ENCODE measurements at regions of chr3 and their contacts with region 1.

Region 1: GRCh38 chr3:188212308-188212969 is 58.5 kb downstream of the LPP start:
- DNase-seq: peak; percentile 43 to 79
- H3K4me3 ChIP-seq: peak overlapping the region; percentile 50 to 54
- H3K27ac ChIP-seq: peak overlapping the region; percentile 87 to 94
- H3K4me1 ChIP-seq: peaks cover 0 to 96% (median 42%) of the 10 kb centered on the region in 4 donors
- H3K27me3 ChIP-seq: no peaks in the 10 kb centered on the region
- CTCF ChIP-seq: no peak

Region 2: DNA sequence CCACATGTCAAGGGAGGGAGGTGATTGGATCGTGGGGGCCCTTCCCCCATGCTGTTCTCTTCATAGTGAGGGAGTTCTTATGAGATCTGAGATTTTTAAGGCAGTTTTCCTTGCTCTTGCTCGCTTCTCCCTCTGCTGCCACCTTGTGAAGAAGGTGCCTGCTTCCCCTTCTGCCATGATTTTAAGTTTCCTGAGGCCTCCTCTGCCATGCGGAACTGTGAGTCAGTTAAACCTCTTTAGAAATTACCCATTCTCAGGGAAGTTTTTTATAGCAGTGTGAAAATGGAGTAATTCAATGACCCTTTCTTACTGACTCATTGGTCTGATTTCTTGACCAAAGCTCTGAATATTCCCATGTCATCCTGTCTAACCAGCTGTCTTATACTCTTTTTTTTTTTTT is 474.9 kb after region 1 on chr3:
- intact Hi-C with region 1: loop called (anchors 5 kb)
- DNase-seq: no peak
- H3K4me3 ChIP-seq: no peak overlapping the region
- H3K27ac ChIP-seq: peak overlapping the region; percentile 33 to 65
- H3K4me1 ChIP-seq: peaks cover 0 to 89% (median 50%) of the 10 kb centered on the region in 4 donors
- H3K27me3 ChIP-seq: no peaks in the 10 kb centered on the region
- CTCF ChIP-seq: no peak

Region 3: GRCh38 chr3:189001559-189001958 is 789.1 kb after region 1 on chr3:
- intact Hi-C with region 1: no loop called
- DNase-seq: no peak
- H3K4me3 ChIP-seq: no peak overlapping the region
- H3K27ac ChIP-seq: no peak overlapping the region
- H3K4me1 ChIP-seq: no peaks in the 10 kb centered on the region
- H3K27me3 ChIP-seq: no peaks in the 10 kb centered on the region
- CTCF ChIP-seq: no peak

Region 4: DNA sequence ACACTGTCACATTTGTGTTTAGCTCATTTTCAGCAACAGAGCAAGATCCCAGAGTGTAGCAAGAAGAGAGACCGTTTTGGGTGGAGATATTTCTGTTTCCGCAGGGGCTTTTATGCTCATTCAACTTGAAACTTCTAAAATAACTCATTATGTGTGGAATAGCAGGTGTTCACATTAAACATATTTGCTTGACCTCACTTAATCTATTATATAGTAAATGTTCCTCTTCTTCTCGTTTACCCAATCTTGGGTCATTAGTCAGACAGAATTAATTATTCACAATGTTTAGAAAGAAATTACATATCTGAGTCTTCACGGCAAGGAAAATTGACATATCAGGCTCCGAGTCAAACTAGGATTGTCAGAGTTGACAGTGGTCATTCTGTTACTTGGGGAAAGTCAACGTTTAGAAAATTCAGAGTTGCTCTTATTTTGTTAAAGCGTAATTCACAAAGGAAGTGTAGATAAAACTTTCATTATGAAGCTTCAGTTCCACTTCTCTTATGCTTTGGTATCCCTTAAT is 1182.2 kb after region 1 on chr3:
- intact Hi-C with region 1: no loop called
- DNase-seq: no peak
- H3K4me3 ChIP-seq: no peak overlapping the region
- H3K27ac ChIP-seq: no peak overlapping the region
- H3K4me1 ChIP-seq: no peaks in the 10 kb centered on the region
- H3K27me3 ChIP-seq: no peaks in the 10 kb centered on the region
- CTCF ChIP-seq: no peak

Measured in tibial artery (tissue), 4 donors.